ENCODE measurements at regions of chr9 and their contacts with region 1.

Region 1: GRCh38 chr9:121902461-121903135 is 190.5 kb downstream of the TTLL11 start:
- DNase-seq: peak; percentile 95
- H3K4me3 ChIP-seq: no peak overlapping the region
- H3K27ac ChIP-seq: peak overlapping the region; percentile 76
- H3K4me1 ChIP-seq: peaks cover 13% of the 10 kb centered on the region
- H3K27me3 ChIP-seq: no peaks in the 10 kb centered on the region
- CTCF ChIP-seq: no peak
- POLR2A ChIP-seq: no peak

Region 2: GRCh38 chr9:121963528-121963995 is 61.0 kb after region 1 on chr9:
- CTCF ChIA-PET with region 1: no interaction called
- POLR2A ChIA-PET with region 1: no interaction called
- dilution Hi-C with region 1: no loop called
- intact Hi-C with region 1: loop called (anchors 2 kb)
- DNase-seq: peak; percentile 84
- H3K4me3 ChIP-seq: peak overlapping the region; percentile 11 to 68 (median 14)
- H3K27ac ChIP-seq: peak overlapping the region; percentile 92
- H3K4me1 ChIP-seq: peaks cover 29% of the 10 kb centered on the region
- H3K27me3 ChIP-seq: no peaks in the 10 kb centered on the region
- CTCF ChIP-seq: no peak
- POLR2A ChIP-seq: peak; percentile 71